ENCODE measurements at regions of chr18 and their contacts with region 1.

Region 1: GRCh38 chr18:63367053-63367953 is at the start of gene KDSR:
- DNase-seq: peak; percentile 99
- ATAC-seq: peak; percentile 95
- H3K4me3 ChIP-seq: peak within 1 kb of the TSS; percentile 88
- H3K27ac ChIP-seq: peak within 1 kb of the TSS; percentile 94
- H3K4me1 ChIP-seq: 0 out of 2 replicates have a peak, but pooled peaks cover 3% of the 10 kb centered on the region
- H3K27me3 ChIP-seq: no peaks in the 10 kb centered on the region
- CTCF ChIP-seq: no peak
- POLR2A ChIP-seq: peak; percentile 95
- RAD21 ChIP-seq: no peak
- total RNA-seq, gene KDSR: 21.5 and 23.3 TPM in 2 replicates

Region 2: DNA sequence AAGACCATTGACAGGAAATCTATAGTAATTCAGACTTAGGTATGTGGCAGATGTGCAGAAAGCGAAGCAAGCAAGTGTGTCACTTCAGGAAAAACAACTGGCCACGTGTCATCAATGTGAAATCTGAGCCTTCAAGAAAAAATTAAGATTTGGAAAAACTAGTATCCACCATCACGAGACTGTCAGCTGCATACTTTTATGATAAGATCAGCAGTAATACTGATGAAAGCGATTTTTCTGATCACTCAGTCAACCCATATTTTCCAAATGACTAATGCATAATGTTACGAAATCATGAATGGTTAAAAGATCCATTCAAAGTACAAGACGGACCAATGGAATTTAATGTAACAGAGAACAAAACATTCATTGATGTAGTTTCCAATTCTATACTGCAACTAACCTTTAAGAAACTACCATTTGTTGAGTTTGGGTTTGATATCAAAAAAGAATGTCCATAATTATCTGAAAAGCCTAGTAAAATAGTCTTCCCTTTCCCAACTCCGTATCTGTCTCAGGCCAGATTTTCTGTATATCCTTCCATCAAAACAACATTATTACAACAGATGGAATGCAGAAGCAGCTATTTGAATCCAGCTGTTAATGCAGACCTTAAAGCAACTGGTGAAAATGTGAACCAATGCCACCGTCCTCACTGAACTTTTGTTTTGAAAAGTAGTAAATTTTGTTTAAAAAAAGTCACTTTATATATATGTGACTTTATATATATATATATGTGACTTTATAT is 30.8 kb before region 1 on chr18:
- CTCF ChIA-PET with region 1: no interaction called
- POLR2A ChIA-PET with region 1: interaction called, 5 read pairs
- dilution Hi-C with region 1: no loop called
- in situ Hi-C with region 1: no loop called
- intact Hi-C with region 1: loop called (anchors 1 kb)
- DNase-seq: peak; percentile 96
- ATAC-seq: peak; percentile 83
- H3K4me3 ChIP-seq: no peak overlapping the region
- H3K27ac ChIP-seq: peak overlapping the region; percentile 96
- H3K4me1 ChIP-seq: peaks cover 6% of the 10 kb centered on the region
- H3K27me3 ChIP-seq: no peaks in the 10 kb centered on the region
- CTCF ChIP-seq: no peak
- POLR2A ChIP-seq: no peak
- RAD21 ChIP-seq: no peak

Region 3: DNA sequence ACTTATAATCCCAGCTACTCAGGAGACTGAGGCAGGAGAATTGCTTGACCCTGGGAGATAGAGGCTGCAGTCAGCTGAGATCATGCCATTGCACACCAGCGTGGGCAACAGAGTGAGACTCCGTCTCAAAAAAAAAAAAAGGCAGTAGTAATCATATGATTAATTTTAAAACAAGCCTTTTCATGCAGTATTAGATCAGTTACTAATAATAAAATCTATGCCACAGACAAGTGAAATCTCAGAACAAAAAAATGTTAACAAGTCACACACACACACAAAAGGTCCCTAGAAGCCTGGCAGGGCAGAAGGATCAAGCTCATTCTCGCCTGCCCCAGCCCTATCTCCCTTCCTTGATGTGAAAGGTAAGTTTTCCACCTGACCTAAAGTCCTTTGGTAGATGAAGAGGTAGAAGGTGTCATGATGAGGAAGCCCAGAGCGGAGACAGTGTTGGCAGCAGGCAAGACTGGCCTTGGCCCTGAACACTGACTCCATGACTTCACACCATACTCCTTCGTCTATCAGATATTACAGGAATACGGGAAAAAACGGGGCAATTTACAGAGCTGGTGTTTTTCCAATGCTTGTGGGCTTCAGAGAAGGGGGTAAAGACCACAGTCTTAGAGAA is 10.9 kb before region 1 on chr18:
- CTCF ChIA-PET with region 1: no interaction called
- POLR2A ChIA-PET with region 1: interaction called, 11 read pairs
- dilution Hi-C with region 1: no loop called
- in situ Hi-C with region 1: no loop called
- intact Hi-C with region 1: no loop called
- DNase-seq: no peak
- ATAC-seq: no peak
- H3K4me3 ChIP-seq: no peak overlapping the region
- H3K27ac ChIP-seq: no peak overlapping the region
- H3K4me1 ChIP-seq: no peaks in the 10 kb centered on the region
- H3K27me3 ChIP-seq: no peaks in the 10 kb centered on the region
- CTCF ChIP-seq: no peak
- POLR2A ChIP-seq: no peak
- RAD21 ChIP-seq: no peak

Region 4: DNA sequence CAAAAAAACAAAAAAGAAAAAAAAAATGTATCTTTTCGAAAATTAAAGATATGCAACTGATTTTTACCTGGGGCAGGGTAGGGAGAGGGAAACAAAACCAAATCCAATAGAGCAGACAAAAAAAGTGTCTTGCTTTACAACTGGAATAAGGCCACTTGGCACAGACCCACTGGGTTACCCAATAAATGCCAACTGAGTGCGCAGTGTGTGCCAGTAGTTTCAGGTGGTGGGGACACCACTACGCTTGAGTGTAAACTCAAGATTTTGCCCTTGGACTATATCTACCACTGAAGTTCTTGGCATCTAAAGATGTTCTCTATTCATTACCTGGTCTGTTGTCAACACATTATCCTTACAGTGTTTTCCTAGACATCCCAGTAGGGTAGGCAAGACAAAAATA is 38.7 kb after region 1 on chr18:
- CTCF ChIA-PET with region 1: no interaction called
- POLR2A ChIA-PET with region 1: no interaction called
- dilution Hi-C with region 1: no loop called
- in situ Hi-C with region 1: no loop called
- intact Hi-C with region 1: loop called (anchors 2 kb)
- DNase-seq: no peak
- ATAC-seq: no peak
- H3K4me3 ChIP-seq: no peak overlapping the region
- H3K27ac ChIP-seq: no peak overlapping the region
- H3K4me1 ChIP-seq: peaks cover 8% of the 10 kb centered on the region
- H3K27me3 ChIP-seq: no peaks in the 10 kb centered on the region
- CTCF ChIP-seq: no peak
- POLR2A ChIP-seq: no peak
- RAD21 ChIP-seq: no peak

Region 5: GRCh38 chr18:63422087-63422809 is 54.9 kb after region 1 on chr18 and contains the start of gene VPS4B:
- CTCF ChIA-PET with region 1: interaction called, 4 read pairs
- POLR2A ChIA-PET with region 1: no interaction called
- dilution Hi-C with region 1: no loop called
- in situ Hi-C with region 1: no loop called
- intact Hi-C with region 1: loop called (anchors 1 kb)
- DNase-seq: peak; percentile 99
- ATAC-seq: peak; percentile 98
- H3K4me3 ChIP-seq: peak within 1 kb of the TSS; percentile 78
- H3K27ac ChIP-seq: peak within 1 kb of the TSS; percentile 90
- H3K4me1 ChIP-seq: no peaks in the 10 kb centered on the region
- H3K27me3 ChIP-seq: no peaks in the 10 kb centered on the region
- CTCF ChIP-seq: no peak
- POLR2A ChIP-seq: peak; percentile 93
- RAD21 ChIP-seq: no peak
- total RNA-seq, gene VPS4B: 31.5 and 41.1 TPM in 2 replicates

Region 6: GRCh38 chr18:64127172-64127571 is 759.9 kb after region 1 on chr18:
- CTCF ChIA-PET with region 1: no interaction called
- POLR2A ChIA-PET with region 1: no interaction called
- dilution Hi-C with region 1: no loop called
- in situ Hi-C with region 1: no loop called
- intact Hi-C with region 1: no loop called
- DNase-seq: no peak
- ATAC-seq: no peak
- H3K4me3 ChIP-seq: no peak overlapping the region
- H3K27ac ChIP-seq: no peak overlapping the region
- H3K4me1 ChIP-seq: no peaks in the 10 kb centered on the region
- H3K27me3 ChIP-seq: no peaks in the 10 kb centered on the region
- CTCF ChIP-seq: no peak
- POLR2A ChIP-seq: no peak
- RAD21 ChIP-seq: no peak

Measured in IMR-90 (cell line).